Activated B cell treated with CpG ODN at 0.5 μM for 24 hours (primary cell): ENCODE measurements at regions of chr10 and their contacts with region 1.

Region 1: GRCh38 chr10:99993701-99994689 is 15.8 kb downstream of the DNMBP start:
- DNase-seq: peak; percentile 54
- ATAC-seq: peak; percentile 94
- H3K4me3 Mint-ChIP-seq: peak overlapping the region; percentile 78
- H3K27ac Mint-ChIP-seq: peak overlapping the region; percentile 92
- H3K4me1 Mint-ChIP-seq: peaks cover 45% of the 10 kb centered on the region
- H3K27me3 Mint-ChIP-seq: no peaks in the 10 kb centered on the region
- CTCF ChIP-seq: no peak

Region 2: DNA sequence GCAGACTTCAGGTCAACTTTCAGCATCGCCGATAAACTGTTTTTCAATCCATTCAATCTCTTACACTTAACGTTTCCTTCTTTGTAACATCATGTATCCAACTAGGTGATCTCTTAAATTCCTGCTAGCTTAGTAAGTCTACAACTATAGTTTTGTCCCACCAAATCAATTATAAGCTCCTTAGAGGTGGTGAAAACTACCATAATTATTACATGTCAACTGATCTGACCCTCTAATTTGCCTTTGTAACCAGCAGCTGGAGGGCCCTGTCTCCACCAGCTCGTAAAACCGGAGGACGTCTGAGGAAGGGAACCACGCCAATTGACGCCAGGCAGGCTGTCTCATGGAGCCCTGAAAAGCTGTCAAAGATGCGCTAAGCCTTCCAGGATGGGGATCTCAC is 98.1 kb before region 1 on chr10:
- CTCF ChIA-PET with region 1: no interaction called
- POLR2A ChIA-PET with region 1: no interaction called
- intact Hi-C with region 1: no loop called
- DNase-seq: no peak
- ATAC-seq: no peak
- H3K4me3 Mint-ChIP-seq: no peak overlapping the region
- H3K27ac Mint-ChIP-seq: no peak overlapping the region
- H3K4me1 Mint-ChIP-seq: no peaks in the 10 kb centered on the region
- H3K27me3 Mint-ChIP-seq: no peaks in the 10 kb centered on the region
- CTCF ChIP-seq: no peak

Region 3: GRCh38 chr10:99976886-99977665 is 16.9 kb before region 1 on chr10:
- CTCF ChIA-PET with region 1: no interaction called
- POLR2A ChIA-PET with region 1: interaction called, 6 read pairs
- intact Hi-C with region 1: loop called (anchors 1 kb)
- DNase-seq: no peak
- ATAC-seq: no peak
- H3K4me3 Mint-ChIP-seq: no peak overlapping the region
- H3K27ac Mint-ChIP-seq: peak overlapping the region; percentile 57
- H3K4me1 Mint-ChIP-seq: peaks cover 77% of the 10 kb centered on the region
- H3K27me3 Mint-ChIP-seq: no peaks in the 10 kb centered on the region
- CTCF ChIP-seq: no peak

Region 4: GRCh38 chr10:99983280-99983988 is 10.6 kb before region 1 on chr10:
- CTCF ChIA-PET with region 1: no interaction called
- POLR2A ChIA-PET with region 1: interaction called, 10 read pairs
- intact Hi-C with region 1: no loop called
- DNase-seq: no peak
- ATAC-seq: peak; percentile 54
- H3K4me3 Mint-ChIP-seq: peak overlapping the region; percentile 45
- H3K27ac Mint-ChIP-seq: peak overlapping the region; percentile 77
- H3K4me1 Mint-ChIP-seq: peaks cover 65% of the 10 kb centered on the region
- H3K27me3 Mint-ChIP-seq: no peaks in the 10 kb centered on the region
- CTCF ChIP-seq: no peak

Region 5: GRCh38 chr10:100009793-100010676 is 16.0 kb after region 1 on chr10 and contains the start of gene DNMBP:
- CTCF ChIA-PET with region 1: interaction called, 17 read pairs
- POLR2A ChIA-PET with region 1: interaction called, 15 read pairs
- intact Hi-C with region 1: loop called (anchors 1 kb)
- DNase-seq: peak; percentile 88
- ATAC-seq: peak; percentile 88
- H3K4me3 Mint-ChIP-seq: peak within 1 kb of the TSS; percentile 91
- H3K27ac Mint-ChIP-seq: peak within 1 kb of the TSS; percentile 89
- H3K4me1 Mint-ChIP-seq: peaks cover 75% of the 10 kb centered on the region
- H3K27me3 Mint-ChIP-seq: no peaks in the 10 kb centered on the region
- CTCF ChIP-seq: no peak
- total RNA-seq, gene DNMBP: 12.5 and 13.1 TPM in 2 replicates

Region 6: GRCh38 chr10:100362570-100363496 is 368.8 kb after region 1 on chr10:
- CTCF ChIA-PET with region 1: no interaction called
- POLR2A ChIA-PET with region 1: no interaction called
- intact Hi-C with region 1: no loop called
- DNase-seq: no peak
- ATAC-seq: no peak
- H3K4me3 Mint-ChIP-seq: no peak overlapping the region
- H3K27ac Mint-ChIP-seq: no peak overlapping the region
- H3K4me1 Mint-ChIP-seq: peaks cover 5% of the 10 kb centered on the region
- H3K27me3 Mint-ChIP-seq: peaks cover 8% of the 10 kb centered on the region
- CTCF ChIP-seq: no peak